ENCODE measurements at regions of chrX and their contacts with region 1.

Region 1: DNA sequence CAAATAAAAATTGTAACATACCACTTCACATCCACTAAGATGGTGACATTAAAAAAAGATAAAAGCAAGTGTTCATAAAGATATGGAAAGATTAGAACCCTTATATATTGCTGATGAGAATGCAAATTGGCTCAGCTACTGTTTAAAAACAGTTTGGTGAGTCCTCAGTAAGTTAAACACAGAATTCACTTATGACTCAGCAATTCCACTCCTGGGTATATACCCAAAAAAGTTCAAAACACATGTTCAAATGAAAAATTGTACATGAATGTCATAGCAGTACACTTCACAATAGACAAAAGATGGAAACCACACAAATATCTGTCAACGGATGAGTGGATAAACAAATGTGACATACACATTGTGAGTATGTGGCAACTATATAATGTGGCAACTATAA is 39.0 kb downstream of the GABRA3 start:
- DNase-seq: no peak
- ATAC-seq: no peak
- H3K4me3 ChIP-seq: no peak overlapping the region
- H3K4me3 Mint-ChIP-seq: no peak overlapping the region
- H3K27ac ChIP-seq: no peak overlapping the region
- H3K27ac Mint-ChIP-seq: no peak overlapping the region
- H3K4me1 ChIP-seq: no peaks in the 10 kb centered on the region
- H3K4me1 Mint-ChIP-seq: no peaks in the 10 kb centered on the region
- H3K27me3 ChIP-seq: no peaks in the 10 kb centered on the region
- H3K27me3 Mint-ChIP-seq: no peaks in the 10 kb centered on the region

Region 2: DNA sequence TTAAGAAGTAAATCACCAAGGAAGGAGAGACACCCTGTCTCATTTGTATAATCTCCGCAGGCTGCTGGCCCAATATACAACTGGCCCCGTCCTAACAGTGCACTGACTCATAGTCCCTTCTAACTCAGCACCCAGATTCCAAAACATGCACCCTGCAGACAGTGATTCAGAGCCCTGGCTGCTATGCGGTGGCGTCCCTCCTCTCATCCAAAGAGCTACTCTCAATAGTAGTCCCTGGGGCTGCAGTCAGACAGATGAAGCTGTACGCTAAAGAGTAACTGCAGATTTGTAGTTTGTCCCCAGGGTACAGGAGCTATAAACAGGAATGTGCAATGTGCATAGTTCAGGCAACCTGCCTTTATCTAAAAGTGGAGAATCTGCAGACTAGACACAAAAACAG is 16.0 kb after region 1 on chrX:
- CTCF ChIA-PET with region 1: no interaction called
- POLR2A ChIA-PET with region 1: no interaction called
- intact Hi-C with region 1: loop called in 1 of 2 experiments (anchors 1 kb)
- DNase-seq: no peak
- ATAC-seq: no peak
- H3K4me3 ChIP-seq: no peak overlapping the region
- H3K4me3 Mint-ChIP-seq: no peak overlapping the region
- H3K27ac ChIP-seq: no peak overlapping the region
- H3K27ac Mint-ChIP-seq: no peak overlapping the region
- H3K4me1 ChIP-seq: no peaks in the 10 kb centered on the region
- H3K4me1 Mint-ChIP-seq: no peaks in the 10 kb centered on the region
- H3K27me3 ChIP-seq: no peaks in the 10 kb centered on the region
- H3K27me3 Mint-ChIP-seq: peaks cover 0 to 14% (median 0%) of the 10 kb centered on the region in 5 donors

Measured in naive thymus-derived CD4-positive, alpha-beta T cell (primary cell).